ENCODE measurements at regions of chrX and their contacts with region 1.

Region 1: GRCh38 chrX:153662266-153662665 is 11.3 kb downstream of the PNCK start:
- DNase-seq: peak; percentile 54 to 63 (median 56)
- H3K4me3 ChIP-seq: no peak overlapping the region
- H3K4me3 Mint-ChIP-seq: peak overlapping the region; percentile 20 to 75 (median 68)
- H3K27ac ChIP-seq: no peak overlapping the region
- H3K27ac Mint-ChIP-seq: no peak overlapping the region
- H3K4me1 ChIP-seq: no peaks in the 10 kb centered on the region
- H3K4me1 Mint-ChIP-seq: peaks cover 0 to 9% (median 3%) of the 10 kb centered on the region in 4 donors
- H3K27me3 ChIP-seq: no peaks in the 10 kb centered on the region
- H3K27me3 Mint-ChIP-seq: peaks cover 0 to 1% of the 10 kb centered on the region in 2 donors

Region 2: DNA sequence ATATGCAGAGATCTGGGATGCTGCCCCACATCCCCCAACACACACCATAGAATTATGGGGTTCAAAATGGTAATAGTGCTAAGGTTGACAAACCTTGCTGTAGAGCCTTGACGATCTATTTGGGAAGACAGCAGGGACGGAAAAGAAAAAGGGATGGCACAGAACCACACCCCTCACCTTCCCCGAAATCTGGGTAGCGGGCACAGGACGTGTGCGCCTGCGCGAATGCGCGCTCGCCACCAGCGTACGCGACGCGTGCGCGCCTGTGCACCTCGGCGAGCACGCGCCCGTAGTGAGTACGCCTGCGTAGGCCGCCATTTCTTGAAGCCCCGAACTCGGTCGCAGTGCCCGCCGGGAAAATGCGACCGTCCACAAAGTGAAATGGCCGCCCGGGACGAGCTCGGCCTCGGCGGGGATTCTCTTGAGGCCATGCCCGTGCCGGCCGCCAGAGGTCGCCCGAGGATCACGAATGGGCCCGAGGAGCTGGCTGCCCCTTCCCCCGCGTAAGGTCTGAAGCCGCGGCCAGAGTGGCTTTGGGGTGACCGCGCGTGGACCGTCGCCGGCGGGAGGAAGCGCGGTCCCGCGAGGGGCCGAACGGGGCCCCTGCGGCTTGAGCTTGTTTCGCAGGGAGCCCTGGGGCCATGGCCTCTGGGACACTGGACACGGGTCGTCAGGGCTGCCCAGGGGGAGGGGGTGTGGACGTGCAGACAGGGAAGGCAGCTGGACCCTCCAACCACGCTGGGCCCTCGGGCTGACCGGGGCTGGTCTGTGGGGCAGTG is 720.7 kb before region 1 on chrX:
- CTCF ChIA-PET with region 1: interaction called, 22 read pairs
- POLR2A ChIA-PET with region 1: no interaction called
- intact Hi-C with region 1: loop called (anchors 1 kb)
- DNase-seq: peak; percentile 89 to 92 (median 90)
- H3K4me3 ChIP-seq: peak overlapping the region in 1 of 2 donors; percentile 68
- H3K4me3 Mint-ChIP-seq: peak overlapping the region; percentile 79 to 91 (median 85)
- H3K27ac ChIP-seq: peak overlapping the region; percentile 53
- H3K27ac Mint-ChIP-seq: peak overlapping the region; percentile 85 to 91 (median 89)
- H3K4me1 ChIP-seq: peaks cover 5% of the 10 kb centered on the region
- H3K4me1 Mint-ChIP-seq: peaks cover 4 to 13% (median 7%) of the 10 kb centered on the region in 4 donors
- H3K27me3 ChIP-seq: no peaks in the 10 kb centered on the region
- H3K27me3 Mint-ChIP-seq: no peaks in the 10 kb centered on the region

Region 3: GRCh38 chrX:152958524-152959465 is 703.5 kb before region 1 on chrX:
- CTCF ChIA-PET with region 1: interaction called, 5 read pairs
- POLR2A ChIA-PET with region 1: no interaction called
- intact Hi-C with region 1: loop called (anchors 1 kb)
- DNase-seq: peak; percentile 90 to 93 (median 93)
- H3K4me3 ChIP-seq: peak overlapping the region in 1 of 2 donors; percentile 28
- H3K4me3 Mint-ChIP-seq: peak overlapping the region; percentile 39 to 86 (median 77)
- H3K27ac ChIP-seq: peak overlapping the region; percentile 31
- H3K27ac Mint-ChIP-seq: peak overlapping the region; percentile 84 to 96 (median 94)
- H3K4me1 ChIP-seq: peaks cover 7% of the 10 kb centered on the region
- H3K4me1 Mint-ChIP-seq: peaks cover 3 to 16% (median 7%) of the 10 kb centered on the region in 4 donors
- H3K27me3 ChIP-seq: no peaks in the 10 kb centered on the region
- H3K27me3 Mint-ChIP-seq: no peaks in the 10 kb centered on the region

Region 4: DNA sequence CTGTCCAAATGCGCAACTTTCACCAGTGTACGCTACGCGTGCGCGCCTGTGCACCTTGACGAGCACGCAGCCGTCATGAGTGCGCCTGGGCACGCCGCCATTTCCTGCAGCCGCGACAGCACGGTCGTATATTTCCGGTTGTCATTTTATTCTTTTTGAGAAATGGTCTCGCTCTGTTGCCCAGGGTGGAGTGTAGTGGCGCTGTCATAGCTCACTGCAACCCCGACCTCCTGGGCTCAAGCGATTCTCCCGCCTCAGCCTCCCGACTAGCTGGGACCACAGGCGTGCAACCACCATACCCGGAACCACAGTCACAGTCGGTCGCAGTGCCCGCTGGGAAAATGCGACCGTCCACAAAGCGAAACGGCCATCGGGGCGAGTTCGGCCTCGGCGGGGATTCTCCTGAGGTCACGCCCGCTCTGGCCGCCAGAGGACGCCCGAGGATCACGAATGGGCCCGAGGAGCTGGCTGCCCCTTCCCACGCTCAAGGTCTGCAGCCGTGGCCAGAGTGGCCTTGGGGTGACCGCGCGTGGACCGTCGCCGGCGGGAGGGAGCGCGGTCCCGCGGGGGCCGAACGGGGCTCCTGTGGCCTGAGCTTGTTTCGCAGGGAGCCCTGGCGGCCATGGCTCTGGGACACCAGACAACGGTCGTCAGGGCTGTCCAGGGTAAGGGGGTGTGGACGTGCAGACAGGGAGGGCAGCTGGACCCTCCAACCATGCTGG is 629.7 kb before region 1 on chrX:
- CTCF ChIA-PET with region 1: interaction called, 19 read pairs
- POLR2A ChIA-PET with region 1: interaction called, 3 read pairs
- intact Hi-C with region 1: no loop called
- DNase-seq: peak; percentile 38 to 62 (median 57)
- H3K4me3 ChIP-seq: peak overlapping the region in 1 of 2 donors; percentile 36
- H3K4me3 Mint-ChIP-seq: peak overlapping the region; percentile 83 to 91 (median 86)
- H3K27ac ChIP-seq: peak overlapping the region; percentile 52
- H3K27ac Mint-ChIP-seq: peak overlapping the region; percentile 79 to 94 (median 90)
- H3K4me1 ChIP-seq: peaks cover 9% of the 10 kb centered on the region
- H3K4me1 Mint-ChIP-seq: peaks cover 0 to 24% (median 8%) of the 10 kb centered on the region in 4 donors
- H3K27me3 ChIP-seq: no peaks in the 10 kb centered on the region
- H3K27me3 Mint-ChIP-seq: no peaks in the 10 kb centered on the region

Region 5: GRCh38 chrX:153539171-153539978 is 122.9 kb before region 1 on chrX:
- CTCF ChIA-PET with region 1: interaction called, 60 read pairs
- POLR2A ChIA-PET with region 1: no interaction called
- intact Hi-C with region 1: no loop called
- DNase-seq: peak; percentile 50 to 58 (median 51)
- H3K4me3 ChIP-seq: no peak overlapping the region
- H3K4me3 Mint-ChIP-seq: no peak overlapping the region
- H3K27ac ChIP-seq: no peak overlapping the region
- H3K27ac Mint-ChIP-seq: no peak overlapping the region
- H3K4me1 ChIP-seq: no peaks in the 10 kb centered on the region
- H3K4me1 Mint-ChIP-seq: no peaks in the 10 kb centered on the region
- H3K27me3 ChIP-seq: no peaks in the 10 kb centered on the region
- H3K27me3 Mint-ChIP-seq: no peaks in the 10 kb centered on the region

Region 6: DNA sequence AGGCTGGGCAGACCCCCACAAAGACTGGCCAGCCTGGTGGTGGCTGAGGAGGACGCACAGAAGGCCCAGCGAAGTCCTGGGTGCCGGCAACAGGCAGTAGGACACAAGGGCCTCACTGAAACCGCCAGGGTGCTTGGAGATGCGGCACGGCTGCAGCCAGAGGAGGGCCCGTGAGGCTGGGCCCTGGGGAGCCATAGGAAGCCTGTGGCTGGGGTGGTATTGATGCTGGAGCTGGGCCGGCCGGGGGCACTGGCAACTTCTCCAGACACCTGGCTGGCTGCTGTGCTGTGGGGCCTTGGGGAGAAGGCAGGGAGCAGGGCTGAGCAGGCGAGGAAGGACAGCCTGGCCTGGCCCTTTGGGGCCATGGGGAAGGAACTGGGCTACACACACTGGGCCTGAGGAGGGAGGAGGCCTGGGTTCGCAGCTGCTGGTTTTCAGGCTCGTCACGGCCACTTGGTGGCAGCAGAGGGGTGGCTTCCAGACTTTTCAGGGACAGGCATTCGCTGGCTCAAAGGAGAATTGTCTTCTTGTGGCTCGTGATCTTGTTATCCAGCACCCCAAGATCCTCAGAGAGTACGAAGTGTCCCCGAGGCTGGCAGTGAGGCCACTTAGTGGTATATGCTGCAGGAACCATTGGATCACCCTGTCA is 107.6 kb before region 1 on chrX:
- CTCF ChIA-PET with region 1: interaction called, 15 read pairs
- POLR2A ChIA-PET with region 1: no interaction called
- intact Hi-C with region 1: loop called (anchors 1 kb)
- DNase-seq: peak; percentile 51 to 59 (median 53)
- H3K4me3 ChIP-seq: no peak overlapping the region
- H3K4me3 Mint-ChIP-seq: no peak overlapping the region
- H3K27ac ChIP-seq: no peak overlapping the region
- H3K27ac Mint-ChIP-seq: no peak overlapping the region
- H3K4me1 ChIP-seq: no peaks in the 10 kb centered on the region
- H3K4me1 Mint-ChIP-seq: no peaks in the 10 kb centered on the region
- H3K27me3 ChIP-seq: no peaks in the 10 kb centered on the region
- H3K27me3 Mint-ChIP-seq: no peaks in the 10 kb centered on the region

Region 7: GRCh38 chrX:153609917-153610428 is 52.3 kb before region 1 on chrX:
- CTCF ChIA-PET with region 1: interaction called, 33 read pairs
- POLR2A ChIA-PET with region 1: interaction called, 3 read pairs
- intact Hi-C with region 1: loop called (anchors 1 kb)
- DNase-seq: peak; percentile 72 to 74 (median 73)
- H3K4me3 ChIP-seq: peak overlapping the region in 1 of 2 donors; percentile 38
- H3K4me3 Mint-ChIP-seq: peak overlapping the region; percentile 81 to 90 (median 83)
- H3K27ac ChIP-seq: no peak overlapping the region
- H3K27ac Mint-ChIP-seq: peak overlapping the region in 5 of 7 donors; percentile 46 to 91 (median 82)
- H3K4me1 ChIP-seq: peaks cover 15% of the 10 kb centered on the region
- H3K4me1 Mint-ChIP-seq: peaks cover 4 to 22% (median 11%) of the 10 kb centered on the region in 4 donors
- H3K27me3 ChIP-seq: no peaks in the 10 kb centered on the region
- H3K27me3 Mint-ChIP-seq: no peaks in the 10 kb centered on the region